ENCODE measurements at regions of chr4 and their contacts with region 1.

Region 1: DNA sequence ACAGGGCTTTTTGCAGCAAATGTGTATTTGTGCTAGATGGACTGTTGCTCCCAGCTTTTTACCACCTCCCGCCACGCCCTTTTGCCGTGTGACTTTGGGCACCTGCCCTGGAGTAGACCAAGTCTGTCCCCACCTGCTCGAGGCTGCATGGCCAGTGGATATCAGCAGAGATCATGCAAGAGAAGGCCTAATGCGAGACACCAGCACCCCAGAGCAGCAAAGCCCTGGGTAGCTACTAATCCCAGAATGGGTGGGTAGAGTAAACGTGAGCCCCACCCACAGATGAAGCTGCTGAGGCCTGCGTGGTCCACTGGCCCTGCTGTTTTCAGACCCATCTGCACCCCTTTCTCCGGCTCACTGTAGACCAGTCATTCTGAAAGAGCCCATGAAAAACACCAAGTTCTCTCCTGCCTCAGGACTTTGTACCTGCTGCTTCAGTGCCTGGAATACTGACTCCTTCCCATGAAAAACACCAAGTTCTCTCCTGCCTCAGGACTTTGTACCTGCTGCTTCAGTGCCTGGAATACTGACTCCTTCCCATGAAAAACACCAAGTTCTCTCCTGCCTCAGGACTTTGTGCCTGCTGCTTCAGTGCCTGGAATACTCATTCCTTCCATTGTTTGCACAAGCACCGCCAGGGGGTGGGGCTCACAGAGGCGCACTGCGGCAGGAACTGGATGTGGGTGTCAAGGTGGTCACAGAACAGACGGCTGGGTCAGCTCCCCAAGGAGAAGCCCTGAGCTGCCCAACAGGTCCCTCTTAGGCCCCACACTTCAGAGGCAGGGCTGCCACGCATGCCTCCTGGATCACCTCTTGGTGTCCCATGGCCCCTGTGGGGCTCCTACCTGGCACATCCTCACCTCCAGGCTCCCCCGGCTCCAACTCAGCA is 5.1 kb upstream of the TNIP2 start:
- DNase-seq: no peak
- ATAC-seq: peak in 1 of 8 donors; percentile 18
- H3K4me3 ChIP-seq: no peak overlapping the region
- H3K27ac ChIP-seq: no peak overlapping the region
- H3K4me1 ChIP-seq: peaks cover 0 to 21% (median 12%) of the 10 kb centered on the region in 9 donors
- H3K27me3 ChIP-seq: no peaks in the 10 kb centered on the region
- CTCF ChIP-seq: peak in 4 of 9 donors; percentile 11 to 18 (median 16)

Region 2: GRCh38 chr4:2800691-2801596 is 39.7 kb after region 1 on chr4:
- intact Hi-C with region 1: loop called in 1 of 10 experiments (anchors 5 kb)
- DNase-seq: peak; percentile 82 to 89
- ATAC-seq: peak; percentile 63 to 78 (median 74)
- H3K4me3 ChIP-seq: peak overlapping the region in 9 of 10 donors; percentile 8 to 57 (median 33)
- H3K27ac ChIP-seq: peak overlapping the region; percentile 52 to 96 (median 88)
- H3K4me1 ChIP-seq: peaks cover 61 to 99% (median 96%) of the 10 kb centered on the region in 9 donors
- H3K27me3 ChIP-seq: no peaks in the 10 kb centered on the region
- CTCF ChIP-seq: no peak

Region 3: DNA sequence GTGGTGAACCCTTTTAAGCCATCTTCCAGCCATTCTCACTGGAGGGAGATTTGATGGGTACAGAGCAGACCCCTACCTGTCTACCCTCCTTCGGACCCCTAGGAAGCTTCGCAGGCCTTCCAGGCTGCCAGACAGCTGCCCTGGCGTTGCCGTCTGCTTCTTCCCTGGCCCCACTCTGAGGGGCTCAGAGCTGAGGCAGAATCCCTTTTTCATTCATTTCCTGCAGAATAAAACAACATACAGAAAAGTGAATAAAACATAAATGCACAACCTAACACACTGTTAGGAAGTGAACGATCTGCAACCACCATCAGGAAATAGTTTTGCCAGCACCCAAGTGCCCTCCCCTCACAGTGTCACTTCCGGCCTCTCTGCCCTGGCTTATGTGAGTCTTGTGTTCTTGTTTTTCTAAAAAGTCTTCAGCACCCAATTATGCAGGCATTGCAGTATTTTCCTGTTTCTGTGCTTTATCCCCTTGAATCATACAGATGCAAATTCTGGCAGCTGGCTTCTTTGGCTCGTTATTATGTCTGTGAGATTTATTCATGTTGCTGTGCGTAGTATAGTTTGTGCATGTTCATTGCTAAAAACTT is 76.7 kb after region 1 on chr4:
- intact Hi-C with region 1: loop called in 5 of 10 experiments (anchors 5 to 10 kb)
- DNase-seq: peak; percentile 27 to 45
- ATAC-seq: peak in 6 of 8 donors; percentile 37 to 69 (median 50)
- H3K4me3 ChIP-seq: peak overlapping the region in 6 of 10 donors; percentile 2 to 32 (median 14)
- H3K27ac ChIP-seq: peak overlapping the region in 9 of 10 donors; percentile 1 to 78 (median 57)
- H3K4me1 ChIP-seq: peaks cover 6 to 74% (median 42%) of the 10 kb centered on the region in 9 donors
- H3K27me3 ChIP-seq: no peaks in the 10 kb centered on the region
- CTCF ChIP-seq: no peak

Region 4: DNA sequence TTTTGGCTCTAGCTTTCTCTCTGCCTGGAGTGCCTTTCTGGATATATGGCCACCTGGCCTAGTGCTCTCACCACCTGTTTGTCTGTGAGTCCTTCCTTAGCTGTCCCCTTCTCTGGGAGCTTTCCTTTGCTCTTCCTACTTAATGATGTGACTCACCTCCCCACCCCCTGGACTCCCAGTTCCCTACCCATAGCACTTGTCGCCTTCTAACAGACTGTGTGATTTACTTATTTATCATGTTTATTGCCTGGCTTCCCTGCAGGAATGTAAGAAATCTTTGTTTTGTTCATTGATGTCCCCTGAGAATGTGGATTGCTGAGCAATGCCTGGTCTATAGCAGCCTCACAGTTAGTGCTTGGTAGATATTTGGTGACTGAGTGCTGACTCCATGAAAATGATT is 101.2 kb after region 1 on chr4:
- intact Hi-C with region 1: loop called in 1 of 10 experiments (anchors 5 kb)
- DNase-seq: no peak
- ATAC-seq: peak in 1 of 8 donors; percentile 39
- H3K4me3 ChIP-seq: no peak overlapping the region
- H3K27ac ChIP-seq: peak overlapping the region; percentile 51 to 87 (median 71)
- H3K4me1 ChIP-seq: peaks cover 60 to 100% (median 98%) of the 10 kb centered on the region in 9 donors
- H3K27me3 ChIP-seq: no peaks in the 10 kb centered on the region
- CTCF ChIP-seq: no peak

Region 5: DNA sequence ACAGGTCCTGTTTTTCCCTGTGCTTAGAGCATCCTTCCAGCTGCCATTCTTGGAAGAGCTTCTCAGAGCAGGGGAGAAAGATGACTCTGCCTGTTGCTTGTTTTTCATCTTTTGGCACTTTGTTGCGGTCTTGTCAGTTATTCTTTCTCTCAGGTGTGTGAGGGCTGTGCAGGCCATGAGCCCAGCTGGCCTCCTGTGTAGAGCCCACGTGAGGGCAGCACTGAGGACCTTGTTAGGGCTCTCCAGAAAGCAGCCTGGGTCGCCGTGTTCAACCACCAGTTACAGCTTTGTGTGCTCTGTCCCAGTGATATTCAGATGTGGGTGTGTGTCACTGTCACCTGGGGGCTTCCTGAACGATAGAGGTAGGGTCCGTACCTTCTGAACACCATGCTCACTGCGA is 149.1 kb after region 1 on chr4:
- intact Hi-C with region 1: loop called in 2 of 10 experiments (anchors 5 to 10 kb)
- DNase-seq: no peak
- ATAC-seq: peak in 2 of 8 donors; percentile 23 to 44
- H3K4me3 ChIP-seq: no peak overlapping the region
- H3K27ac ChIP-seq: peak overlapping the region in 1 of 10 donors; percentile 12
- H3K4me1 ChIP-seq: peaks cover 0 to 30% (median 5%) of the 10 kb centered on the region in 9 donors
- H3K27me3 ChIP-seq: no peaks in the 10 kb centered on the region
- CTCF ChIP-seq: peak in 5 of 9 donors; percentile 17 to 35 (median 31)

Region 6: DNA sequence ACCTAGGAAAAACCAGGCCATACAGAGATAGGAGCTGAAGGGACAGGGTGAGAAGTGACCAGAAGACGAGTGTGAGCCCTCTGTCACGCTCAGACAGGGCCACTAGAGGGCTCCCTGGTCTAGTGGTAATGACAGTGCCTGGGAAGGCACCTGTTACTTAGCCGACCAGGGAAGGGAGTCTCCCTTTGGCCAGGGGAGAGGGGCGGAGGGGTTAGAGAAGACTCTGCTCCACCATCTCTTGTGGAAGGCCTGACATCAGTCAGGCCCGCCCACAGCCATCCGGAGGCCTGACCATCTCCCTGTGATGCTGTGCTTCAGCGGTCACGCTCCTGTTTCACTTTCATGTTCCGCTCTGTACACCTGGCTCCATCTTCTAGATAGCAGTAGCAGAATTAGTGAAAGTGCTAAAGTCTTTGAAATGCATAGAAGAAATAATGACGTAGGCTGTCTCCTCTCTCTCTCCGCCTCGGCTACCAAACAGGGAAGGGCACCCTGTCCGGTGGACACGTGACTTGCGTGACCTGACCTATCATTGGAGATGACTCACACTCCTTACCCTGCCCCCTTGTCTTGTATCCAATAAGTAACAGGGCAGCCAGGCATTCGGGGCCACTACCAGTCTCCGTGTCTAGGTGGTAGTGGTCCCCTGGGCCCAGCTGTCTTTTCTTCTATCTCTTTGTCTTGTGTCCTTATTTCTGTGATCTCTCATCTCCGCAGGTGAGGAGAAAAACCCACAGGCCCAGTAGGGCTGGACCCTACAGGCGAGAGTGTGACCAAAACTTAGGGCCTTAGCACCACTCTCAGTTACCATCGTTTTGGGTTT is 286.4 kb after region 1 on chr4:
- intact Hi-C with region 1: loop called in 2 of 10 experiments (anchors 10 kb)
- DNase-seq: peak; percentile 57 to 62
- ATAC-seq: peak; percentile 45 to 68 (median 62)
- H3K4me3 ChIP-seq: peak overlapping the region in 5 of 10 donors; percentile 17 to 45 (median 31)
- H3K27ac ChIP-seq: peak overlapping the region in 1 of 10 donors; percentile 60
- H3K4me1 ChIP-seq: peaks cover 0 to 45% (median 12%) of the 10 kb centered on the region in 9 donors
- H3K27me3 ChIP-seq: no peaks in the 10 kb centered on the region
- CTCF ChIP-seq: peak; percentile 47 to 87 (median 76)

Region 7: DNA sequence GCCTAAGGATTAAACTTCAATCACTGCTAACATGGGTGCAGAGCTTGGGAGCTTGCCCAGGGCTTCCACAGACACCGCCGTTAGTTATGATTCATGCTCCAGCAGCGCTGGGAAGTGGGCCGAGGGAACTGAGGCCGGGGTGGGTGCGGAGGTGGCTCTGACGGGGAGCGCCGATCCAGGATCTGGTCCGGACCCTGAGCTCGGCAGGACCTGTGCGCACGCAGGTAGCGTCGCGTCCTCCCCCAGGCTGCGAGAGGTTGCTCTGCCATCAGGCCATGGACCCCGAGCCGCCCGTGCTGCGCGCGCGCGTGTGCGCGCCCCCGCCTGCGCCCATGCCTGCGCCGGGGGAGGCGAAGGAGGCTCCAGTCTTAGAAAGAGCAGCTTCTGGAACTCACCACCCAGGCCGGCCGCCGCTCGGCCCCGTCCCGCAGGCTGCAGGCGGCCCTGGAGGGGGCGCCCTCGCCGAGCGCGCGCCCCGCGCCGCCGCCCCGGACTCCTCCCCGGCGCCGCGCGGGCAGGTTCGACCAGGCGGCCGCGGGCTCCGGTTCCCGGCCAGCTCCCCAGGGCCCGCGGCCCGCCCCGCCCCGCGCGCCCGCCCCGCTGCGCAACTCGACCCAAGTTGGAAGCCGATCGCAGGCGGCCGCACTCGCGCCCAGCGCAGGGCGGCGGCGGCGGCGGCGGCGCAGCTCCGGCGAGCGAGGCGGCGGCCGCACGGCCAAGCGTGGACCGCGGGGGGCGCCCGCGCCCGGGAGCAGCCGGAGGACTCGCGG is 1004.2 kb after region 1 on chr4:
- intact Hi-C with region 1: no loop called
- DNase-seq: peak; percentile 20 to 31
- ATAC-seq: peak; percentile 30 to 68 (median 54)
- H3K4me3 ChIP-seq: peak overlapping the region; percentile 10 to 53 (median 44)
- H3K27ac ChIP-seq: peak overlapping the region in 6 of 10 donors; percentile 15 to 48 (median 36)
- H3K4me1 ChIP-seq: peaks cover 0 to 11% (median 5%) of the 10 kb centered on the region in 9 donors
- H3K27me3 ChIP-seq: peaks cover 0 to 61% (median 48%) of the 10 kb centered on the region in 7 donors
- CTCF ChIP-seq: peak in 6 of 9 donors; percentile 7 to 45 (median 24)

Measured in heart right ventricle (tissue), 16 donors.